Head of caudate nucleus (tissue), 42 donors: ENCODE measurements at regions of chr1 and their contacts with region 1.

Region 1: GRCh38 chr1:175033953-175034352 is 10.7 kb upstream of the MRPS14 start:
- DNase-seq: no peak

Region 2: DNA sequence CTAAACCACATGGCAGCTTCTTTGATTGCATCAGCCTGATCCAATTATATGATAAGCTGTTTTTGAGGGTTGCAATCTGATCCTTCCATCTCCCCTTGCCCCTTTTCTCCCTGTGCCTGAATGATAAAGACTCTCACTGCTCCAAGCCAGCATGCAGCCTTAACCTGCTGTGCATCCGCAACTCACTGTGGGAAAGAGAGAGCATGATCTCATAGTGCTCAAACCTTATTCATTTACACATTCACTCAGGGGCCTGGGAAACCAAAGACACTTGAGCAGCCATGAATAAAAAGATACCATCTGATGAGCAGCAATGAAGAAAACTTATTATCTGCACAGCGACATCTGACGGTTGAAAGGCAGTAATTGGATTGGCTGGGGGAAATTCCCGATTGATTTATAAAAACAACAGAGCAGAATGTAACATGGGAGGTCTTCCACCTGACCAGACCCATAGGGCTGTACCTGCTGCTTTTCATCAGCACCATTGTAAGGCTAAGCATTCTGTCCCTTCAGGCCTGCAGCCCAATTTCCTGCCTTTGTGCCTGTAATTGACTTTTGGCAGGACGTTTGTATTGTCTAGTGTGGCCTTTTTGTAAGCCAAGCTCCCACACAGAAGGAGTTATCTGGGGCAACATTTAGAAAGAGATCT is 96.2 kb after region 1 on chr1:
- intact Hi-C with region 1: loop called (anchors 5 kb)
- DNase-seq: peak in 1 of 42 donors; percentile 12

Region 3: GRCh38 chr1:175146529-175147213 is 112.7 kb after region 1 on chr1:
- intact Hi-C with region 1: no loop called
- DNase-seq: peak; percentile 13 to 86 (median 62)